ENCODE measurements at regions of chr4 and their contacts with region 1.

Region 1: DNA sequence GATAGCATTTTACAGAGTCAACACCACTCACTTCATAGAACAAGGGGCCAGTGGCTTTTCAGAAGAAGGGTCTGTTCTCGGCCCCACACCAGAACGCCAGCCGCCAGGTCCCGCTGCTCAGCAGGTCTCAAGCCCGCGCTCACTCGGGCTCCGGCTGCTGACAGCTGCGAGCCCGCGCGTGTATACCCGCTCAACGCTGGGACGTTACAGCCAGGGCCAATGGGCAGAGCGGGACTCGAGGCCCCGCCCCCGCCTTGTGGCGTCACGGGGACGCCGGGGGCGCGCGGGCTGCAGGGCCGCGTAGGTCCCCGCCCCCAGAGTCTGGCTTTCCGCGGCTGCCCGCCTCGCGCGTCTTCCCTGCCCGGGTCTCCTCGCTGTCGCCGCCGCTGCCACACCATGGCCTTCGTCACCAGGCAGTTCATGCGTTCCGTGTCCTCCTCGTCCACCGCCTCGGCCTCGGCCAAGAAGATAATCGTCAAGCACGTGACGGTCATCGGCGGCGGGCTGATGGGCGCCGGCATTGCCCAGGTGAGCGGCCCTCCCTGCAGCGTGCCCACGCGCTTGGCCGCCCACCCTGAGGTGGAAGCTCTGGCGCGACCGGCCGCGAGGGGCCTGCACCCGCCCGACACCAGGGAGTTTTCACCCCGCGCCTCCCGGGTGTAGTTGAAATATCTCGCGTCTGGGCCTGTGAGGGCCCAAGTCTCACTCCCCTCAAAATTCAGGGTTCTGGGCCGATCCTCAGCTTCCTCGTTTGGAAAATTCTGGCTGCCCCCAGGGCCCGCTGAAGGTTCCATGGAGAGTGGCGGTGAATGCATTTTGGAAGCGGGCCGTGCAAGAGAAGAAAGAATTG is at the start of gene HADH:
- DNase-seq: peak; percentile 94 to 97
- H3K4me3 ChIP-seq: peak within 1 kb of the TSS; percentile 91 to 92
- H3K27ac ChIP-seq: peak within 1 kb of the TSS; percentile 91
- H3K4me1 ChIP-seq: peaks cover 52% of the 10 kb centered on the region
- H3K27me3 ChIP-seq: no peaks in the 10 kb centered on the region
- CTCF ChIP-seq: no peak
- POLR2A ChIP-seq: peak in 1 of 2 donors; percentile 58
- total RNA-seq, gene HADH: 30.9 TPM

Region 2: GRCh38 chr4:107930821-107931774 is 58.7 kb before region 1 on chr4 and contains the start of gene CYP2U1:
- intact Hi-C with region 1: loop called (anchors 10 kb)
- DNase-seq: peak in 1 of 2 donors; percentile 88
- H3K4me3 ChIP-seq: peak within 1 kb of the TSS; percentile 74 to 82
- H3K27ac ChIP-seq: peak within 1 kb of the TSS; percentile 86
- H3K4me1 ChIP-seq: peaks cover 12% of the 10 kb centered on the region
- H3K27me3 ChIP-seq: no peaks in the 10 kb centered on the region
- CTCF ChIP-seq: peak in 2 of 3 experiments; percentile 6 to 17
- POLR2A ChIP-seq: peak in 1 of 2 donors; percentile 52
- total RNA-seq, gene CYP2U1: 19.6 TPM

Measured in vagina (tissue), 2 donors.